Mammary epithelial cell (primary cell): ENCODE measurements at regions of chr20 and their contacts with region 1.

Region 1: DNA sequence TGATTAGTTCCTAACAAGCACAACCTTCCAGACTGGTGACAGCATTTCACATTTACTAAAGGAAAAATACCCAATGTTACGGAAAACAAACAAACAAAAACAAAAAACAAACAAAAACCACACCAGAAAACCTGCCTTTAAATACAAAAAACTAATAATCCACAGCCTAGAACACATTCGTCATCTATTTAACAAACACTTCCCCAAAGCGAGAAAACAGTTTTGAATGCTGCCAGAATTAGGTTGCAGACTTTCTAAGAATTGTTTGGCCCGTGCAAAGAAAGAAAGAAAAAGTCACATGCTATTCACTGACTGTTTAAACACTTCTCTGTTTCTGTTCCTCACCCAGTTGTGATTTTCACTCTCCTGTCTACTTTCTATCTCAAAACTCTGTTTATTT is 52.6 kb downstream of the BCAS1 start:
- DNase-seq: no peak
- H3K4me3 ChIP-seq: no peak overlapping the region
- H3K27ac ChIP-seq: no peak overlapping the region
- H3K4me1 ChIP-seq: no peaks in the 10 kb centered on the region
- H3K27me3 ChIP-seq: peaks cover 2% of the 10 kb centered on the region
- CTCF ChIP-seq: no peak

Region 2: GRCh38 chr20:53957451-53958172 is 60.2 kb before region 1 on chr20:
- CTCF ChIA-PET with region 1: no interaction called
- dilution Hi-C with region 1: no loop called
- in situ Hi-C with region 1: loop called in 1 of 2 experiments (anchors 10 kb)
- intact Hi-C with region 1: no loop called
- DNase-seq: no peak
- H3K4me3 ChIP-seq: no peak overlapping the region
- H3K27ac ChIP-seq: no peak overlapping the region
- H3K4me1 ChIP-seq: no peaks in the 10 kb centered on the region
- H3K27me3 ChIP-seq: no peaks in the 10 kb centered on the region
- CTCF ChIP-seq: peak; percentile 15 to 23

Region 3: GRCh38 chr20:54062812-54063280 is 45.0 kb after region 1 on chr20:
- CTCF ChIA-PET with region 1: no interaction called
- dilution Hi-C with region 1: no loop called
- in situ Hi-C with region 1: no loop called
- intact Hi-C with region 1: no loop called
- DNase-seq: peak; percentile 39
- H3K4me3 ChIP-seq: no peak overlapping the region
- H3K27ac ChIP-seq: no peak overlapping the region
- H3K4me1 ChIP-seq: peaks cover 10% of the 10 kb centered on the region
- H3K27me3 ChIP-seq: no peaks in the 10 kb centered on the region
- CTCF ChIP-seq: peak; percentile 67 to 77